Activated CD4-positive, alpha-beta T cell treated with anti-CD3 and anti-CD28 coated beads, Interleukin-2, amount 10 ng/mL, durations not matched to agents 7 days and 5 days (primary cell): ENCODE measurements at regions of chr10 and their contacts with region 1.

Region 1: DNA sequence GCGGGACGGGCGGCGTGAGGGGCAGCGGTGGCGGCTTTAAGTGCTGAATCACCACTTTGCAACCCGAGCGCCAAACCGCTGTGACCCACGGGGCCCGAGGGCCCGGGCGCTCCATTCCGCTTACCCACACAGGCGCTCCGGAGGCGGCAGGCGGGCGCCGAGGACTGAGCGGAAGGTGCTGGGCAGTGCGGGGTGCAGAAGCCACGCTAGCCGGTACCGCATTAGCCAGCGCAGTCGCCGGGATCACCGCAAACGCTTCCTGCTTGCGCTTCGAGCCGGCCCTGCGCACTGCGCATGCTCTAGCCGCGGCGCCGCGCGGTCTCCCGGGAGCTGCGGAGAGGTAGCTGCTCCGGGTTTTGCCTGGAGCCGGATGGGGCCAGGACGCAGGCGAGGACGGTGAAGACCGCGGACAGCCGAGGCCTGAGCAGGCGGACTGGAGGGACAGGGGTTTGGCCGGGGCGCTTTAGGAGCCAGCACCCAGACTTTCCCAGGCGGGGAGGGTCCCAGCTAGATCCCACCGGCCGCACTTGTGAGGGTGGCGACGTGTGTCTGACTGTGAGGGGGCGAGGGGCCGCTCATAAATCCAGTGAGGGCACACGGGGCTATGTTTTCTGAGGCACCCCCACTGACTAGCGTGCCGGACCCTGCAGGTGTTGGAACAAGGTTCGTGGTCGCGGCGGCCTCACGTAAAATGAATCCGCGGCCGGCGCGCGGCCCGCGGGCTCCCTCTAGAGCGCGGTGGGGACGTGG is at the start of gene IDE:
- DNase-seq: peak; percentile 83
- H3K4me3 Mint-ChIP-seq: peak within 1 kb of the TSS; percentile 83
- H3K27ac Mint-ChIP-seq: peak within 1 kb of the TSS; percentile 90
- H3K4me1 Mint-ChIP-seq: peaks cover 27% of the 10 kb centered on the region
- H3K27me3 Mint-ChIP-seq: peaks cover 2% of the 10 kb centered on the region
- total RNA-seq, gene IDE: 21.7 to 29.0 TPM

Region 2: DNA sequence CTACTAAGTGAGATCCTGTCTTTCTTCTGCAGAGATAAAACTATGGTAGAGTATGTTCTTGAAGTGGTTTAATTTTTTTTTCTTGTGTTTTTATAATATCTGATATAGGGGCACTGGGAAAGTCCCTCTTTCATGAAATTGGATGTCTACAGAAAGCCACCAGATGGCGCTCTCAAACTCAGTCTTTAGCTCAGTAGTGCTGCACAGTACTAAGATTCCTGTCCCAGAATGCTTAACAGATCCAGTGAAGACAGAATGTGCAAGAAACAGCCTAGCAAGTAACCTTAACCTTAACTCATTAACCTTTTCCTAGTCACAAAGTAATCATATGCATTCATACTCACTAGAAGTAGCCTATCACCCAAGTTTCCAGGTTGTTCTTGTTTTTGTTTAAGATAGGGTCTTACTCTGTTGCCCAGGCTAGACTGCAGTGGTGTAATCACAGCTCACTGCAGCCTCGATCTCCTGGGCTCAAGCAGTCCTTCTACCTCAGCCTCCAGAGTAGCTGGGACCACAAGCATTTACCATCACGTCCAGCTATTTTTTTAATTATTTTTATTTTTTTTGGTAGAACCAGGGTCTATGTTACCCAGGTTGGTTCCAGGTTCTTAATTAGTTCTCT is 56.8 kb before region 1 on chr10:
- CTCF ChIA-PET with region 1: interaction called, 11 read pairs
- POLR2A ChIA-PET with region 1: interaction called, 3 read pairs
- DNase-seq: peak; percentile 79
- H3K4me3 Mint-ChIP-seq: no peak overlapping the region
- H3K27ac Mint-ChIP-seq: no peak overlapping the region
- H3K4me1 Mint-ChIP-seq: peaks cover 6% of the 10 kb centered on the region
- H3K27me3 Mint-ChIP-seq: no peaks in the 10 kb centered on the region

Region 3: GRCh38 chr10:92562424-92562823 is 11.5 kb before region 1 on chr10:
- CTCF ChIA-PET with region 1: interaction called, 18 read pairs
- POLR2A ChIA-PET with region 1: no interaction called
- DNase-seq: no peak
- H3K4me3 Mint-ChIP-seq: no peak overlapping the region
- H3K27ac Mint-ChIP-seq: no peak overlapping the region
- H3K4me1 Mint-ChIP-seq: peaks cover 3% of the 10 kb centered on the region
- H3K27me3 Mint-ChIP-seq: no peaks in the 10 kb centered on the region

Region 4: DNA sequence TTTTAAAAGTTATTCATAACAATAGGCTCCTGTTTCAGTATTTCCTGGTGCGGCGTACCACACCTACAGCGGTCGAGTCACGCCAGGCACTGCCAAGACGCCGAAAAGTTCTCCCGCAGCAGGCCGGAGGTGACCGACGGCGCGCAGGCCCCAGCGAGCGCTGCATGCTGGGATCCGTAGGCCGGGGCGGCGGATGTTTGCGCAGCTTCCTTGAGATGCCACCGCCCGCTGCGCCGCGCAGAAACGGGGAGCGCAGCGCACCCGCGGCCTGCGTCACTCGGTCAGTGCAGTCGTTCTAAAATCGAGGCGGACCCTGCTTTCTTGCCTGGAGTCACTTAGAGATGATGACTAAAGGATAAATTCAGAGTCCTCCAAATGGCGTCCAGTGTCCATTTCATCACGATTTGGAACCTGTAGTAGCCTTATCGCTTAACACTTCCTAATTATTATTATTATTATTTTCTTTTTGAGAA is 17.6 kb after region 1 on chr10:
- CTCF ChIA-PET with region 1: interaction called, 18 read pairs
- POLR2A ChIA-PET with region 1: no interaction called
- DNase-seq: peak; percentile 91
- H3K4me3 Mint-ChIP-seq: peak overlapping the region; percentile 95
- H3K27ac Mint-ChIP-seq: peak overlapping the region; percentile 100
- H3K4me1 Mint-ChIP-seq: peaks cover 41% of the 10 kb centered on the region
- H3K27me3 Mint-ChIP-seq: no peaks in the 10 kb centered on the region